ENCODE measurements at regions of chr7 and their contacts with region 1.

Region 1: GRCh38 chr7:77252506-77252905 is 52.9 kb upstream of the FGL2 start:
- DNase-seq: no peak
- ATAC-seq: peak in 1 of 2 donors; percentile 11

Region 2: DNA sequence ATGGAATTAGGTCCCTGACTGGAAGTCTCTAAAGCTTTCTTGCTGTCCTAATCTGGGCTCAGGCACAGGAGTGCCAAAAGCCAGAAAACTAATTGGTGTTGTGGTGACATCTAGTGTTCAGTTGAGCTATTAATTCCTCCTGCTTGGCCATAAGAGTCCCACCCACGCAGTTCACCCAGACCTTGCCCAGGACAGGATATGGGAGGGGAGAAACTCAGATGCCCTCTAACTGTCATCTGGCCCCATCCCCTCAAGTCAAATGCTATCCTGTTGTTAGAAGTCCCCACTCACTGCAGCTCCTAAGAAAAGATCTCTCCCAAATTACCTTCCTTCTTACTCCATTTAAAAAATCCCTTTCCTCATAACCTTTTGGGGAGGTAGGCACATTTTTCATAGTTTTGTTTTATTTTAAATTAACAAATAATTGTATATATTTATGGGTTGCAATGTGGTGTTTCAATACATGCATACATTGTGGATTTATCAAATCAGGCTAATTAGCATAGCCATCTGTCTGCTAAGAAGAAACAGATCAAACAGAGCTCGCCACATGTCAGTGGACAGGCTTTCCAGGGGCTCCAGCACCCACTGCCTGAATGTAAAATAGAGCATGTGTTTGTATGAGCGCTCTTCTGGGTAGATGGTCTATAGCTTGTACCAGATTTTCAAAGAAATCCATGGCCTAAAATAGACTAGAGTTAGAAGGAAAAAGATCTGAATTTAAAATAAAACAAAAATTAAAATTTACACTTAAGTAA is 79.6 kb after region 1 on chr7:
- intact Hi-C with region 1: loop called (anchors 5 kb)
- DNase-seq: peak; percentile 75
- ATAC-seq: peak; percentile 89 to 90

Measured in left cardiac atrium (tissue), 4 donors.